Mammary epithelial cell (primary cell): ENCODE measurements at regions of chr7 and their contacts with region 1.

Region 1: DNA sequence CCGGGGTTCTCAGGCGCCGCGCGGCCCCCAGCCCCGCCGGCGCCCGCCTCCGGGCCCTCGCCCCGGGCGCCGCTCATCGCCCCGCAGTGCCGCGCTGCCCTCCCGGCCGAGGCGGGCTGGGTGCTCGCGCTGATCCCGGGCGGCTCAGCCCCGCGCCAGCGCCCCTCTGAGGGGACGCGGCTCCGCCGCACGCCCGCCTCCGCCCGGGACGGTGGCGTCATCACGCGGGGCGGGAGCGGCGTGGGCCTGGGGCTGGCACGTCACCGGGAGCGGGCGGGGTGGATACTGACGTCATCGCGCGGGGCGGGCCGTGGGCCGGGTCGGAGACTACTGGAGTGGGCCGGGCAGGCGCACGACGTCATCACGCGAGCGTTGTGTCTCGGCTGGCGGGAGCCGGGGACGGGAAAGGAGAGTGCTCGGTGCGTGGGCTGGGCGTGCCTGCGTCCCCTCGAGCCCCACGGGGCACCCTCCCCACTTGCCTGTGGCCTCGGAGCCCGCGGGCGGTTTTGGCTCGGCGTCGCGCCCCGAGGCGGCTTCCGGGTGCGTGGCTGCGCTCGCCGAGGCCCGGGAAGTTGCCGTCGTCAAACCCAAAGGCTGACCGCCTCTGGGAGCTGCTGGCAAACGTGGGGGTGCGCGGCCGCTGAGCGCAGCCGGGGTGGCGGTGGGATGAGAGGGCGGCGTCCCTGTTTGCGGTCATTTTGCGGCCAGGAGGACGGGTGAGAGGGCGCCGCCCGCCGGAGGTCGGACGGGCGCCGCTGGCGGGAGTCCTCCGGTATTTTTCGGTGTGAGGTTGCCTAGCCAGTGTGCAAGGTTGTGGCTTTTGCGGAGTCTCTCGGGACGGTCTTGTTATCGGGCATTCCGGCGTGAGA is at the start of gene ESYT2:
- DNase-seq: peak; percentile 96
- H3K4me3 ChIP-seq: peak within 1 kb of the TSS; percentile 89 to 97 (median 97)
- H3K27ac ChIP-seq: peak within 1 kb of the TSS; percentile 96
- H3K4me1 ChIP-seq: peaks cover 13% of the 10 kb centered on the region
- H3K27me3 ChIP-seq: no peaks in the 10 kb centered on the region
- CTCF ChIP-seq: peak in 1 of 2 donors; percentile 39
- total RNA-seq, gene ESYT2: 78.9 to 101 TPM

Region 2: DNA sequence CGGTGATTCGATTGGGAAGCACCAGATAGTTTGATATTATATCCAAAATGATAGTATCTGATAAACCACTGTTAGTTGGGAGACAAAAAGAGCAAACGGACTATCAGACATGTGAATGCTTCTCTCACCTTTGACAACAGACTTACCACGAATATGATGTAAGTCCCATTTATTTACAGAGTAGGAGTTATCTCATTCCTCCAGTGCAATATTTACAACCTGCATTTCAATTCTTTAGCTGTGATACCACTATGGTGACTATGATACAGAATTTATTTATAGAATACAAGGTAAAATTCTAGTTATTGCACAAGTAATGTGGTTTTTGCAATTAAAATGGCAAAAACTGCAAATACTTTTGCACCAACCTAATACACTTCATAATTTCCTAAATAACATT is 61.9 kb before region 1 on chr7:
- CTCF ChIA-PET with region 1: interaction called, 16 read pairs
- dilution Hi-C with region 1: no loop called
- in situ Hi-C with region 1: no loop called
- intact Hi-C with region 1: no loop called
- DNase-seq: no peak
- H3K4me3 ChIP-seq: no peak overlapping the region
- H3K27ac ChIP-seq: no peak overlapping the region
- H3K4me1 ChIP-seq: no peaks in the 10 kb centered on the region
- H3K27me3 ChIP-seq: no peaks in the 10 kb centered on the region
- CTCF ChIP-seq: no peak

Region 3: GRCh38 chr7:158789842-158790241 is 39.7 kb before region 1 on chr7:
- CTCF ChIA-PET with region 1: no interaction called
- dilution Hi-C with region 1: loop called (anchors 5 kb)
- in situ Hi-C with region 1: no loop called
- intact Hi-C with region 1: no loop called
- DNase-seq: no peak
- H3K4me3 ChIP-seq: no peak overlapping the region
- H3K27ac ChIP-seq: no peak overlapping the region
- H3K4me1 ChIP-seq: no peaks in the 10 kb centered on the region
- H3K27me3 ChIP-seq: no peaks in the 10 kb centered on the region
- CTCF ChIP-seq: no peak

Region 4: GRCh38 chr7:158818325-158819213 is 11.0 kb before region 1 on chr7:
- CTCF ChIA-PET with region 1: no interaction called
- dilution Hi-C with region 1: no loop called
- in situ Hi-C with region 1: no loop called
- intact Hi-C with region 1: loop called (anchors 1 kb)
- DNase-seq: peak; percentile 99
- H3K4me3 ChIP-seq: peak overlapping the region; percentile 35 to 55 (median 53)
- H3K27ac ChIP-seq: peak overlapping the region; percentile 100
- H3K4me1 ChIP-seq: peaks cover 63% of the 10 kb centered on the region
- H3K27me3 ChIP-seq: no peaks in the 10 kb centered on the region
- CTCF ChIP-seq: peak in 1 of 2 donors; percentile 14

Region 5: DNA sequence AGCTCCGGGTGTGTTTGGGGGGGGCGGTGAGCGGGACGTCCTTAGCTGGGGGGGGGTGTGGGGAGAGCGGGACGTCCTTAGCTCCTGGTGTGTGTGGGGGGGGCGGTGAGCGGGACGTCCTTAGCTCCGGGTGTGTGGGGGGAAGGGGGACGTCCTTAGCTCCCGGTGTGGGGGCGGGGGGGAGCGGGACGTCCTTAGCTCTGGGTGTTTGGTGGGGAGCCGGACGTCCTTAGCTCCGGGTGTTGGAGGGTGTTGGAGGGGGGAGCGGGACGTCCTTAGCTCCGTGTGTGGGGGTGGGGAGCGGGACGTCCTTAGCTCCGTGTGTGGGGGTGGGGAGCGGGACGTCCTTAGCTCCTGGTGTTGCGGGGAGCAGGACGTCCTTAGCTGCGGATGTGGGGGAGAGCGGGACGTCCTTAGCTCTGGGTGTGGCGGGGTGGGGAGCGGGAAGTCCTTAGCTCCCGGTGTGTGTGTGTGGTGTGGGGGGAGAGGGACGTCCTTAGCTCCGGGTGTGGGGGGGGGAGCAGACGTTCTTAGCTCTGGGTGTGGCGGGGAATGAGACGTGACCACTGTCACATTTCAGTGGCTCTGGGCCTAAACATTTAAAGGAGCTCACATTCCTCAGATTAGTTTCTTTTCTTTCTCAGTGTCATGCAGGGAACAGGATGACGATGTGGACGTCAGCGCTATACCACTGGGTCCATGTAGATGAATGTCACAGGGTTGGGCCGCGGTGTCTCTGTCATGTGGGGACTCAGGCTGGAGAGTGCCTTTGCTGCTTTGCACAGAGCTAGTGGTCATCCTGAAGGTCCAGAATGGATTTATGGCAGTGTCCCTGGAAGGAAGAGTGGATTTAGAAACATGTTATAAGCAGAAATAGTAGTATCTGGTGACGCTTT is 34.3 kb after region 1 on chr7:
- CTCF ChIA-PET with region 1: interaction called, 11 read pairs
- dilution Hi-C with region 1: no loop called
- in situ Hi-C with region 1: no loop called
- intact Hi-C with region 1: no loop called
- DNase-seq: peak; percentile 70
- H3K4me3 ChIP-seq: peak overlapping the region; percentile 26 to 59 (median 40)
- H3K27ac ChIP-seq: peak overlapping the region; percentile 80
- H3K4me1 ChIP-seq: peaks cover 7% of the 10 kb centered on the region
- H3K27me3 ChIP-seq: no peaks in the 10 kb centered on the region
- CTCF ChIP-seq: no peak

Region 6: GRCh38 chr7:158933468-158934139 is 104.0 kb after region 1 on chr7:
- CTCF ChIA-PET with region 1: no interaction called
- dilution Hi-C with region 1: no loop called
- in situ Hi-C with region 1: no loop called
- intact Hi-C with region 1: no loop called
- DNase-seq: no peak
- H3K4me3 ChIP-seq: no peak overlapping the region
- H3K27ac ChIP-seq: no peak overlapping the region
- H3K4me1 ChIP-seq: no peaks in the 10 kb centered on the region
- H3K27me3 ChIP-seq: no peaks in the 10 kb centered on the region
- CTCF ChIP-seq: no peak

Region 7: DNA sequence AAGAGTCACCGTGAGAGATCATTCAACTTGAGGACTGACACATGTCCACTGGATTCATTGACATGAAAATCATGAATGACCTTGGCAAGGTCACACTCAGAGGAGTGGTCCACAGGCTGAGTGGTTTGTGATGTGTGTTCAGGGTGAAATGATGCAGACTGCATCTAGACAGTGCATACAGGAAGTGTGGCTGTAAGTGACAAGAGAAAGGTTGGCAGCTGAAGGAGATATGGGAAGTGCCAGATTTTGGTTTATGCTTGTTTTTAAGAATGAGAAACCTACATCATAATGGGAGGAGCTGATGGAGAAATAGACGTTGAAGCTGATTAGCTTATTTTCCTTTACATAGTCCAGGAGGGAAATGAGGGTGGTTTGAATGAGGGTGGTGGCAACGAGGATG is 379.9 kb after region 1 on chr7:
- CTCF ChIA-PET with region 1: no interaction called
- dilution Hi-C with region 1: no loop called
- in situ Hi-C with region 1: no loop called
- intact Hi-C with region 1: no loop called
- DNase-seq: no peak
- H3K4me3 ChIP-seq: no peak overlapping the region
- H3K27ac ChIP-seq: no peak overlapping the region
- H3K4me1 ChIP-seq: no peaks in the 10 kb centered on the region
- H3K27me3 ChIP-seq: no peaks in the 10 kb centered on the region
- CTCF ChIP-seq: no peak